ENCODE measurements at regions of chr6 and their contacts with region 1.

Region 1: GRCh38 chr6:75208298-75209183 is 2.7 kb upstream of the COL12A1 start:
- DNase-seq: peak; percentile 71 to 90 (median 84)
- H3K4me3 ChIP-seq: peak overlapping the region in 58 of 59 donors; percentile 6 to 68 (median 41)
- H3K27ac ChIP-seq: no peak overlapping the region
- H3K27me3 ChIP-seq: peaks cover 0 to 65% (median 36%) of the 10 kb centered on the region in 45 donors
- CTCF ChIP-seq: peak; percentile 74 to 99 (median 92)

Region 2: DNA sequence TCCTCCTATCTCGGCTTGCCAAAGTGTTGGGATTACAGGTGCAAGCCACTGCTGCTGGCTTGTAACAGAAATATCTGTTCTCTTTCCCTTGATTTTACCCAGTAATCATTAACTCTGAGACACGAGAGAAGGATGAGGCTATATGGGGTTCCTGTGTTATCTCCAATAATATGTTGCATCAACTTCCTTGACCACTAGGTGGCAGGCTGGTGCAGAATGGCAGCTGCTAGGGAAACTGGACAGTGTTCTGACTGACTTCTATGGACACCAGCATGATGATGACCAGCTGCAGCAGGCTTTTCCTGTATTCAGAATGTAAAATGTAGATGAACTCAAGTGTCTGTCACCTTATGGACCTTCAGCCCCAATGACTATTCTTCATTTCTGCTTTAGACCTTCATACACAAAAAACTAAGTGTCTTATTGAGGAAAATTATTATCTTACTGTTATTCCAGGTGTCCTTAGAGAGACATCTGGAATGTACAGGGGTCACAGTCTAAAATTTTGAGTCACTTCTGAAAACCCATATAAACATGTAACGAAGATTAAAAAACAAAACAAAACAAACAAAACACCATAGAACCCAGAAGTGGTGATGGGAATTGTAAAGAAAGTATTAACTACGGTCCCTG is 1533.0 kb before region 1 on chr6:
- intact Hi-C with region 1: loop called in 1 of 2 experiments (anchors 5 kb)
- DNase-seq: peak; percentile 26 to 85 (median 62)
- H3K4me3 ChIP-seq: no peak overlapping the region
- H3K27ac ChIP-seq: no peak overlapping the region
- H3K27me3 ChIP-seq: peaks cover 0 to 3% (median 0%) of the 10 kb centered on the region in 45 donors
- CTCF ChIP-seq: peak; percentile 75 to 94 (median 86)

Region 3: DNA sequence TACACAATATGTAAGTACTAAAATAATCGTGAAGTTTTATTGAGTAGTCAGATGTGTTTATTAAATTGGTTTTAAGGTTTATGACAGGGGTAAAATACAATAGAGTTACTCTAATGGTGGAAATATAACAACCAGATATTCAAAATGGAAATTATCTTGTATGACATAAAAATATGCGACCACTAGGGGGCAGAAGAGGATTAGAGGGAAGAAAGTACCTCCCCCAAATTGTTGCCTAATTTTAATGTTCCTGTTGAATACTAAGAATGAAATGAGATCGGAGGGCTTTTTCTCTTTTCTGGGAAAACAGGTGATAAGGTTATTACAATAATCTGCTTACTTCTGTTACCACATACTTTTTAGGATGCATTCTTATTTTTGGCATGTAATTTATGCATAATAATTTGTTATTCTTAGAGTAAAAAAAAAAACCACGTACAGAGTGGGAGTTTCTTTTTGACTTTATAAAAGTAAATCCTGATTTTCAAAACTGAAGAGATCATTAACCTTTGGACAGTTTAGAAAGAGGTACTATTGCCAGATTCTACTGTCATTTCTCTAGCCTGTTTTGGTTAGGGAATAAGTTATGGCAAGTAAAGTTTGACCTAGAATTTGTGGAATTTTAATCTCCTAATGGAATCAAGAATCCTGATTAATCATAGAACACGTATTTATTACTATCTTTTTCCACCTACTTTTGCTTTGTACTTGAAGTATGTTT is 1353.4 kb before region 1 on chr6:
- intact Hi-C with region 1: loop called (anchors 10 kb)
- DNase-seq: no peak
- H3K4me3 ChIP-seq: peak overlapping the region in 4 of 59 donors; percentile 17 to 24 (median 22)
- H3K27ac ChIP-seq: no peak overlapping the region
- H3K27me3 ChIP-seq: no peaks in the 10 kb centered on the region
- CTCF ChIP-seq: peak; percentile 58 to 87 (median 70)

Region 4: GRCh38 chr6:73969971-73970970 is 1238.3 kb before region 1 on chr6:
- intact Hi-C with region 1: loop called in 1 of 2 experiments (anchors 5 kb)
- DNase-seq: no peak
- H3K4me3 ChIP-seq: no peak overlapping the region
- H3K27ac ChIP-seq: no peak overlapping the region
- H3K27me3 ChIP-seq: peaks cover 0 to 6% (median 0%) of the 10 kb centered on the region in 45 donors
- CTCF ChIP-seq: peak in 54 of 56 donors; percentile 27 to 70 (median 48)

Region 5: GRCh38 chr6:74091136-74091793 is 1117.3 kb before region 1 on chr6:
- intact Hi-C with region 1: loop called (anchors 5 kb)
- DNase-seq: no peak
- H3K4me3 ChIP-seq: no peak overlapping the region
- H3K27ac ChIP-seq: no peak overlapping the region
- H3K27me3 ChIP-seq: peaks cover 0 to 11% (median 0%) of the 10 kb centered on the region in 45 donors
- CTCF ChIP-seq: peak; percentile 50 to 81 (median 69)

Region 6: GRCh38 chr6:74851596-74851995 is 356.9 kb before region 1 on chr6:
- intact Hi-C with region 1: no loop called
- DNase-seq: no peak
- H3K4me3 ChIP-seq: no peak overlapping the region
- H3K27ac ChIP-seq: no peak overlapping the region
- H3K27me3 ChIP-seq: no peaks in the 10 kb centered on the region
- CTCF ChIP-seq: no peak

Measured in dorsolateral prefrontal cortex (tissue), 120 donors.